Naive thymus-derived CD4-positive, alpha-beta T cell (primary cell): ENCODE measurements at regions of chr13 and their contacts with region 1.

Region 1: GRCh38 chr13:108342369-108343289 is 73.1 kb downstream of the TNFSF13B start:
- DNase-seq: peak in 6 of 9 donors; percentile 10 to 48 (median 35)
- ATAC-seq: peak; percentile 69
- H3K4me3 ChIP-seq: peak overlapping the region; percentile 15
- H3K4me3 Mint-ChIP-seq: peak overlapping the region in 7 of 10 donors; percentile 1 to 85 (median 60)
- H3K27ac ChIP-seq: peak overlapping the region; percentile 44
- H3K27ac Mint-ChIP-seq: peak overlapping the region in 7 of 9 donors; percentile 0 to 89 (median 77)
- H3K4me1 ChIP-seq: peaks cover 4 to 20% of the 10 kb centered on the region in 2 donors
- H3K4me1 Mint-ChIP-seq: peaks cover 4 to 57% (median 16%) of the 10 kb centered on the region in 7 donors
- H3K27me3 ChIP-seq: no peaks in the 10 kb centered on the region
- H3K27me3 Mint-ChIP-seq: peaks cover 0 to 16% (median 0%) of the 10 kb centered on the region in 5 donors

Region 2: DNA sequence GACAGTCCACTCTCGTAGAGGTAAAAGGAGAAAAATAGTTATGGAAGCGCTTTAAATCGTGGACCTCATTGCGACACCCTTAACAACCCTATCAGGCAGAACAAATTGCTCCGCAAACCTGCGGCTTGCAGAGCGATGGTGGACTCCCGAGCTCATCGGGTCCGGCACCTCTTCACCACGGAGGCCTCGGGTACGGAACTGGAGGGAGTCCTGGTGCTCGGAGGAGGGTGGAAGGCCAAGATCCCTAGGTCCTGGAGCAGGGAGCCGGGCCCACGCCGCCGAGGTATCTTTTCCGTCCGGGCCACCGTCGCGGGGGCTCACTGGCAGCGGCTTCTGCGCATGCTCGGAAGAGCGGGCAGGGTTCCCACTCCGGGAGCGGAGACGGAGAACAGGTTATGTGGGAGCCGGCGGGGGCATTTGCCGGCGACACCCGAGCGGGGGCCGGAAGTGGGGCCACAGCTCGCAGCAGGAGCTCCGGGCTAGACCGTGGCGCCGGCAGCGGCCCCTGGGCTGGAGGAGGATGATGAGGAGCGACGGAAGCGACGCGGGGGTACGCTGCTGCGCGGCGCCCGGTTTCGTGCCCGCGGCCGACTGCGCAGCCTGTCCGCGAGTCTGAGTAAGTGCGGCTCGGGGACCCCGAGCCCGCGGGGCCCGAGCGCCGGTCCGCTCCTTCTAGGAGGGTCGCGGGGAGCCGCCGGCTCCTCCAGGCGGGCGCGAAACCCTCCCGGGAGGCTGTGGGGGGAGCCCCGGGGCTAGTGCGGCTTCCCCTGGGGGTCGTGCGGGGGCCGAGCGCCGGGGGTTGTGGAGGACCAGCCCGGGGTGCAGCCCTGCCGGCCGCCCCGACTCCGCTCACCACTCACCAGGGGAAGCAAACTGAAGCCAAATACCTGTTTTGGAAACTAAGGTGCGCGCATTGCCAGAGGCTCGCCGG is 124.3 kb before region 1 on chr13 and contains the start of gene ABHD13:
- CTCF ChIA-PET with region 1: no interaction called
- POLR2A ChIA-PET with region 1: no interaction called
- intact Hi-C with region 1: loop called in 1 of 2 experiments (anchors 1 kb)
- DNase-seq: peak; percentile 88 to 98 (median 93)
- ATAC-seq: peak; percentile 81
- H3K4me3 ChIP-seq: peak within 1 kb of the TSS; percentile 98
- H3K4me3 Mint-ChIP-seq: peak within 1 kb of the TSS; percentile 92 to 98 (median 96)
- H3K27ac ChIP-seq: peak within 1 kb of the TSS; percentile 79
- H3K27ac Mint-ChIP-seq: peak within 1 kb of the TSS; percentile 95 to 98 (median 96)
- H3K4me1 ChIP-seq: peaks cover 34 to 50% of the 10 kb centered on the region in 2 donors
- H3K4me1 Mint-ChIP-seq: peaks cover 16 to 77% (median 72%) of the 10 kb centered on the region in 7 donors
- H3K27me3 ChIP-seq: no peaks in the 10 kb centered on the region
- H3K27me3 Mint-ChIP-seq: peaks cover 0 to 4% (median 0%) of the 10 kb centered on the region in 5 donors
- total RNA-seq, gene ABHD13: 10.3 to 19.8 (median 12.7) TPM

Region 3: DNA sequence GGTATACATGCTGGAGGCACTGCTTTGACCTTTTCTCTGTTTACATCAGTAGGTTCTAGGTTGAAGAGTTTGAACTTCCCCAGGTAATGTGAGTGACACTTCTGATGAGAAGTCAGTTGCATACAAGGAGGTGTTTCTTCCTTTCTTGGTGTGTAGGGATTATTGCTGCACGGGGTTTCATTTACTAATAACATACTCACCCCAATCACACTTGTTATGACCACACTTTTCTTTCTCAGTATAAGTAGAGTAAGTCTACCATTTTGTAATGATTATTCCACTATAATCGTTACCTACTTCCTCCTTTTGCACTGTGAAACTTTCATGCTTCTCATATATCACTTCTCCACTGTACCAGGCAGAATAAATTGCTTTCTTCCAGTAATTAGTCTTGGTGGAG is 64.9 kb after region 1 on chr13:
- CTCF ChIA-PET with region 1: no interaction called
- POLR2A ChIA-PET with region 1: no interaction called
- intact Hi-C with region 1: loop called in 1 of 2 experiments (anchors 1 kb)
- DNase-seq: no peak
- ATAC-seq: no peak
- H3K4me3 ChIP-seq: no peak overlapping the region
- H3K4me3 Mint-ChIP-seq: peak overlapping the region in 2 of 10 donors; percentile 84 to 87
- H3K27ac ChIP-seq: peak overlapping the region; percentile 1
- H3K27ac Mint-ChIP-seq: peak overlapping the region in 8 of 9 donors; percentile 64 to 95 (median 82)
- H3K4me1 ChIP-seq: peaks cover 35% of the 10 kb centered on the region in 2 donors
- H3K4me1 Mint-ChIP-seq: peaks cover 13 to 70% (median 55%) of the 10 kb centered on the region in 7 donors
- H3K27me3 ChIP-seq: no peaks in the 10 kb centered on the region
- H3K27me3 Mint-ChIP-seq: peaks cover 0 to 2% (median 0%) of the 10 kb centered on the region in 5 donors

Region 4: GRCh38 chr13:108508263-108508662 is 165.6 kb after region 1 on chr13:
- CTCF ChIA-PET with region 1: interaction called, 9 read pairs
- POLR2A ChIA-PET with region 1: no interaction called
- intact Hi-C with region 1: loop called in 1 of 2 experiments (anchors 5 kb)
- DNase-seq: peak in 4 of 9 donors; percentile 9 to 27 (median 13)
- ATAC-seq: no peak
- H3K4me3 ChIP-seq: no peak overlapping the region
- H3K4me3 Mint-ChIP-seq: no peak overlapping the region
- H3K27ac ChIP-seq: no peak overlapping the region
- H3K27ac Mint-ChIP-seq: no peak overlapping the region
- H3K4me1 ChIP-seq: no peaks in the 10 kb centered on the region
- H3K4me1 Mint-ChIP-seq: peaks cover 0 to 5% (median 0%) of the 10 kb centered on the region in 7 donors
- H3K27me3 ChIP-seq: no peaks in the 10 kb centered on the region
- H3K27me3 Mint-ChIP-seq: no peaks in the 10 kb centered on the region

Region 5: GRCh38 chr13:108674771-108675170 is 332.1 kb after region 1 on chr13:
- CTCF ChIA-PET with region 1: no interaction called
- POLR2A ChIA-PET with region 1: no interaction called
- intact Hi-C with region 1: loop called in 1 of 2 experiments (anchors 5 kb)
- DNase-seq: no peak
- ATAC-seq: no peak
- H3K4me3 ChIP-seq: no peak overlapping the region
- H3K4me3 Mint-ChIP-seq: no peak overlapping the region
- H3K27ac ChIP-seq: no peak overlapping the region
- H3K27ac Mint-ChIP-seq: no peak overlapping the region
- H3K4me1 ChIP-seq: no peaks in the 10 kb centered on the region
- H3K4me1 Mint-ChIP-seq: peaks cover 0 to 10% (median 0%) of the 10 kb centered on the region in 7 donors
- H3K27me3 ChIP-seq: no peaks in the 10 kb centered on the region
- H3K27me3 Mint-ChIP-seq: peaks cover 0 to 46% (median 9%) of the 10 kb centered on the region in 5 donors